ENCODE measurements at regions of chr11 and their contacts with region 1.

Region 1: DNA sequence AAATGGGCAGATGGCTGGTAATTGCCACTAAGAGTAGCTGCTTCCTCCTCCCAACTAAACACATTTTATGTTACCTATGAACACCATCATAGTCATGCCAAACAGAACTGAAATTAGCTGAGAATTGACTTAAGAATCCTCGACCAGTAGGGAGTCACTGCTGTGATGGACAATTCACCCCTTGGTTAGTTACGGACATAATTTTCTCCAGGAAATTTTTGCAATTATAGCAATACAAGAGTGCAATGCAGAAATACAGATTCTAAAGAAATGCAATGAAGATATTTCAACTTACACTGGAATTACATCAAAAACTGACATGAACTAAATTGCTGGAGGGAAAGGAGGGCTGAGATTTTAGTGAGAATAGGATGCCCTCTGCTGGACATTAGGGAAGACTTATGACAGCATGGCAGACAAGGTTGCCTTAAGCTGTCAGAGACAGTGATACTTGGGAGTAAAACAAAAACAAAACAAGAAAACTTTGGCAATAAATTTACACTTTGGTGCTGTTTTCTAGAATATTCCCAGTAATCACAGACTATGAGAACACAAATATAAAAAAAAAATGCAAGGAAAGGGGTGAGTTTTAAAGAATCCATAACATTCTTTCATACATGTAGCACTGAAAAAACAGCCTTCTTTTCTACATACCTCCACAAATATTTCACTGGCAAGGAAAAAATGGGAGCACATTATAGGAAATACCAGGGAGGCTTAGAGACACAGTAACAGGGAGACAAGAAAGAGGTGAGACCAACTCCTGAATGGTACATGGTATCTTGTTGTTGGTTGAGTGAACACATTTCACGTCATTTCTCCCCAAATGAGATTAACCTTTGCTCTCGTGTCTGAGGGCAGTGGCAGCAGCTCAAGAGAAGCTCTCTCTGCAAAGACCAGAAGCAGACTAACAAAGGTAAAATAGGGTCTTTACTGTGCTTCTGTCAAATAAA is 11.2 kb upstream of the PPP2R1B start:
- DNase-seq: peak; percentile 62
- CTCF ChIP-seq: peak; percentile 63

Region 2: GRCh38 chr11:111512296-111513239 is 264.8 kb before region 1 on chr11 and contains the start of gene BTG4:
- CTCF ChIA-PET with region 1: no interaction called
- POLR2A ChIA-PET with region 1: no interaction called
- DNase-seq: peak; percentile 28
- CTCF ChIP-seq: no peak

Region 3: DNA sequence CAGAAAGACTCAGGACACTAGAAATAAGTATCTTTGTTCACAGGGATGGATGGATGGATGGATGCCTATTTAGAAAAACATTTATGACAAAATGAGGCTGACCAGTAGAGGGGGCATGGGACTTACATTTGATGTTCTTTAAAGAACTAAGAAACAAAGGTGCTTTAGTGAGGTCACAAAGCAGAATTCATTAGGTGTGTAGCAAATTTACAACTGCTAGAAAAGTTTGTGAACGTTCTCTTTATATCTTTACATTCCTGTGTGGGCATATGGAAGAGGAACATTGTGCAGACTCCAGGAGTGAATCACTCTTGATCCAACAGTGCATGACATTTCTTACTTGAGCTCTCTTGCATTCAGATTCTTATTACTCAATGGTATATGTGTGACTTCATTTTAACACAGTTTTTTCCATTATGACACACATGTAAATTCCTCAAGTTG is 191.0 kb before region 1 on chr11:
- CTCF ChIA-PET with region 1: interaction called, 52 read pairs
- POLR2A ChIA-PET with region 1: no interaction called
- DNase-seq: peak; percentile 43
- CTCF ChIP-seq: peak; percentile 53

Region 4: GRCh38 chr11:111612224-111612623 is 165.1 kb before region 1 on chr11:
- CTCF ChIA-PET with region 1: interaction called, 12 read pairs
- POLR2A ChIA-PET with region 1: no interaction called
- DNase-seq: no peak
- CTCF ChIP-seq: no peak

Region 5: GRCh38 chr11:111766093-111766833 is 11.1 kb before region 1 on chr11 and contains the start of gene PPP2R1B:
- CTCF ChIA-PET with region 1: interaction called, 72 read pairs
- POLR2A ChIA-PET with region 1: no interaction called
- DNase-seq: peak; percentile 97
- CTCF ChIP-seq: no peak

Region 6: DNA sequence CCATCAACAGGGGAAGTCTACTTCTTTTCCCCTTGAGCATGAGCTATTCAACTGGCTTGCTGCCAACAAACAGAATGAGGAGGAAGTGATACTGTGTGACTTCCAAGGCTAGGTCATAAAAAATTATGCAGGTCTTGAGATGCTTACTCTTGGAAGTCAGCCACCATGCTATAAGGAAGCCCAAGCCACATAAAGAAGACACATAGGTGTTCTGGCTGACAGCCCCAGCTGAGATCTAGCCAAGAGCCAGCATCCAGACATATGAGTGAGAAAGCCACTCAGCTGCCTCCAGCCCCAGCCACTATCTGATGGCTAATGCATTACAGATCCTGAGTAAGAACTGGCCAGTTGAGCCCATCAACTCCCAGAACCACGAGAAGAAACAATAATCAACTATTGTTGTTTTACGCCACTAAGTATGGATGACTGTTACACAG is 19.8 kb after region 1 on chr11:
- CTCF ChIA-PET with region 1: interaction called, 51 read pairs
- POLR2A ChIA-PET with region 1: no interaction called
- DNase-seq: peak; percentile 25
- CTCF ChIP-seq: no peak

Region 7: GRCh38 chr11:111960916-111961315 is 183.5 kb after region 1 on chr11:
- CTCF ChIA-PET with region 1: no interaction called
- POLR2A ChIA-PET with region 1: no interaction called
- DNase-seq: no peak
- CTCF ChIP-seq: no peak

Measured in GM10248 (cell line).